Heart left ventricle (tissue), 16 donors: ENCODE measurements at regions of chr14 and their contacts with region 1.

Region 1: DNA sequence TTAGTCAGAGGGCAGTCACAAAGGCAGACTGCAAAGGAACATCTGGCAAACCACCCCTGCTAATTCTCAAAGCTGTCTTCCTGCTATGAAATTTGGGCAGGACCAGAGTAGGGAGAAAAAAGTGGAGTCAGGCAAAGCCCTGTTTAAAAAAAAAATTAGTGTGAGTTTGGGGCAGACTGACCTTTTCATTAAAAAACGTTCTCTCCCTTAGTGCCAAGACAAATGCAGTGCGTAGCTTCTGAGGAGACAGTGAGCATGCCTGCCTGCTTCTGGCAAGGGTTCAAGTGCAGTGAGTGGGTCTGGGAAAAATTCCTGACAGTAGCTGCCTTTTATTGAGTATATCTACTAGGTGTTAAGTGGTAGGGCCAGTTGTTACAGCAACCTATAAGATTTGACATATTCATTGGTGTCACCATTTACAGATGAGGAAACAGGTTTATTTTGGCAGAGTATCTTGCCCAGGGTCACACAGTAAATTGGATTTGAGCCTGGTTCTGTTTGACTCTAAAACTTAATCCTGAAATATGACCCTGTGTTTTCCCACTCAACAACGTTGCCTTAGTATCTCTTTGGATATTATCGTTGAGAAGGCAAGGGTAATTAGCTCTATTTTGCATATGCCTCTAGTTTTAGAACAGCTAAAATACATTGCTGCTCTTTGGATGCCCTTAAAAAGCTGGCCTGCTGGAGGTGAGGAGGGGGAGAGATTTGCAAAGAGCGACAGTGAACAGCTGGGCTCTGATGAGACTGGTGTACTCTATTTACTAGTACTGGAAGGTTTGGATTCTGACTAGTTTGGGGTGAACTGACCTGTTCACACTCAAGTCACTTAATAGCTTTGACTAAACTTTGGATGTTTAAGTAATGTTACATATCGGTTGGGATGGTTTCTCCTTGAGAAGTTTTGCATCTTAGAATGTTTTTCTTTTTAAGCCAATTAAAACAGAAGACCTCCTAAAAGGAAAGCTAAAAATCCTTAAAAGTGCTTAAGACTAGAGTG is 72.8 kb downstream of the PAPOLA start:
- DNase-seq: no peak
- ATAC-seq: peak in 3 of 4 donors; percentile 35 to 43 (median 41)
- H3K4me3 ChIP-seq: no peak overlapping the region
- H3K27ac ChIP-seq: no peak overlapping the region
- H3K4me1 ChIP-seq: peaks cover 0 to 23% (median 12%) of the 10 kb centered on the region in 12 donors
- H3K27me3 ChIP-seq: no peaks in the 10 kb centered on the region
- CTCF ChIP-seq: no peak
- POLR2A ChIP-seq: no peak

Region 2: DNA sequence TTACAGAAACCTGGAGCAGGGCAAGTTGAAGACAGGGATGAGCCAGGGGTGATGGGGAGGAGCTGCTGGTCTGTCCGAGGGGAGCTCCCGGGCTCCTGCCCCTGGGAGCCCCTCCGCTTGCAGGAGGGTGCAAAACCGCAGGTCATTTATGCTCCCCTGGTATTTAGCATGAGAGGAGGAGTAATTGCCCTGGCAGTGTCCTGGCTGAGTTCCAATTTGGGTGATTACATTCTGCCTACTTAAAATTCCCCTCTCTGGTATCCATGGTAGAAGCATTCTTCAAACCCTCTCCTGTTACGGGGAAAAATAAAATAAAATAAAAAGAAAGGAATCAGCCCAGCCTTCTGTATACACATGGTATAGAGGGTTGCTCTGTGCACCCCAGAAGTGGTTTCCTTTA is 160.6 kb after region 1 on chr14:
- intact Hi-C with region 1: loop called in 3 of 10 experiments (anchors 5 kb)
- DNase-seq: no peak
- ATAC-seq: no peak
- H3K4me3 ChIP-seq: no peak overlapping the region
- H3K27ac ChIP-seq: no peak overlapping the region
- H3K4me1 ChIP-seq: no peaks in the 10 kb centered on the region
- H3K27me3 ChIP-seq: peaks cover 0 to 69% (median 16%) of the 10 kb centered on the region in 9 donors
- CTCF ChIP-seq: no peak
- POLR2A ChIP-seq: no peak

Region 3: DNA sequence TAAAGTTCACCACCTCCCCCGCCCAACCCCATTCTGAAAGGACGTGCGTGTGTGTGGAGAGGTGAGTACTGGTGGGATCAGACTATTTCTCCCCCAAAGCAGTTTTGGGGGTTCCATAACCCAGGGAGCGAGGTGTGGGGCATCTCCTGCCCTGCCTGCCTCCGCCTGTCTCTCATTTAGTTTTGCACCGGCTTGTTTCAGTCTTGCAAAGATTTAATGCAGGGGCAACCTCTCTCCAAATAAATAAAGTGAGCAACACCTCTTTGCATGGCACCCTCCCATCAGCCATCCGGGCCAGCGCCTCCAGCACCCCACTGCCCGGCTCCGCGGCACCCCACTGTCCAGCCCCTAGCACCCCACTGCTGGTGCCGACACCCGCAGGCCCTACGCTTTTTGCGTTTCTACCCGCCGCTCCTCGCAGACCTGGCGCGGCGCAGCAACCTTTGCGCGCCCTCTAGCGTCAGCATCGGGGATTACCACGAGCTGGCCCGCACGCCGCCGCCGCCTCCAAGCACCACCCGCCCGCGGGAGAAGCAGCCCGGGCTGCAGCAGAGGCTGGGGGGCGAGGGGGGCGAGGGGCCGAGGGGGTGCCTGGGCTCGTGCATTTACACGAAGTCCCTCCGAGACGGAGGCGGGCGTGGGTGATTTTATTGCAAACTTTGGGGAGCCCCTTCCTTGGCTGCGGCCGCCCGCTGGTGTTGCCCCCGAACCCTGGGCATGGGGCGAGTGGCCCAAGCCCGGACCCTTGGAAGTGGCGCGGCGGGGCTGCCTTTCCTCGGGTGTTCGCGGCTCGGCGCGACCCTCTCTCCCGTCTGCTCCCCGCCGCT is 166.4 kb after region 1 on chr14:
- intact Hi-C with region 1: loop called in 4 of 10 experiments (anchors 5 kb)
- DNase-seq: peak; percentile 37 to 84 (median 54)
- ATAC-seq: peak in 3 of 4 donors; percentile 62 to 85 (median 77)
- H3K4me3 ChIP-seq: peak overlapping the region in 10 of 12 donors; percentile 19 to 53 (median 42)
- H3K27ac ChIP-seq: no peak overlapping the region
- H3K4me1 ChIP-seq: peaks cover 0 to 10% (median 6%) of the 10 kb centered on the region in 12 donors
- H3K27me3 ChIP-seq: peaks cover 0 to 90% (median 30%) of the 10 kb centered on the region in 9 donors
- CTCF ChIP-seq: peak; percentile 72 to 95 (median 88)
- POLR2A ChIP-seq: no peak

Region 4: GRCh38 chr14:96748362-96748761 is 173.4 kb after region 1 on chr14:
- intact Hi-C with region 1: loop called in 3 of 10 experiments (anchors 5 kb)
- DNase-seq: peak in 1 of 5 donors; percentile 4
- ATAC-seq: no peak
- H3K4me3 ChIP-seq: no peak overlapping the region
- H3K27ac ChIP-seq: no peak overlapping the region
- H3K4me1 ChIP-seq: no peaks in the 10 kb centered on the region
- H3K27me3 ChIP-seq: peaks cover 0 to 56% (median 14%) of the 10 kb centered on the region in 9 donors
- CTCF ChIP-seq: no peak
- POLR2A ChIP-seq: no peak

Region 5: DNA sequence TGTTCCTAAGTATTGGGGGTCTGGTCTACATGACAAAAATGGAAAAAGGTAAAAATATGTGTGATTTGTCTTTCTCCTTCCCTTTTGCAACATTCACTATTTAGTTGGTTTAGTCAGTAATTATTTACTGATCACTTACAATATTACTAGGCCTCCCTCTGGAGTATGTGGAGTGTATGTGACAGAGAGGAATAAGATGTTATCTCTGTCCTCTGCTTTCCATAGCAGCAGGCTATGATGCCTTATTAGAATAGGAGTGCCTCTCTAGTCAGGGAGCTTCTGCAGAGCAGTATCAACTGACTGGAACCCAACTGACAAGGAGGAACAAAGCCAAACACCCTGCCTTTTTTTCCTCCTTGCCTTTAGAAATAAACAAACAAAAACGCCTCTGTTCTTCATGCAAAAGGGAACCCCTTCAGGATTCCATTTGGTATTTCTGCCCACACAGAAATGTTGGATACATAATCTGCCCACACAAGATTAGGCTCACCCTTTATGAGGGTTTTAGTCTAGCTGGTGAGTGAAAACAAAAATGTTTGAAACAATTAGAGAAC is 272.4 kb after region 1 on chr14:
- intact Hi-C with region 1: loop called in 1 of 10 experiments (anchors 5 kb)
- DNase-seq: no peak
- ATAC-seq: no peak
- H3K4me3 ChIP-seq: no peak overlapping the region
- H3K27ac ChIP-seq: no peak overlapping the region
- H3K4me1 ChIP-seq: no peaks in the 10 kb centered on the region
- H3K27me3 ChIP-seq: no peaks in the 10 kb centered on the region
- CTCF ChIP-seq: no peak
- POLR2A ChIP-seq: no peak

Region 6: GRCh38 chr14:97959251-97959650 is 1384.3 kb after region 1 on chr14:
- intact Hi-C with region 1: no loop called
- DNase-seq: no peak
- ATAC-seq: no peak
- H3K4me3 ChIP-seq: no peak overlapping the region
- H3K27ac ChIP-seq: no peak overlapping the region
- H3K4me1 ChIP-seq: no peaks in the 10 kb centered on the region
- H3K27me3 ChIP-seq: no peaks in the 10 kb centered on the region
- CTCF ChIP-seq: no peak
- POLR2A ChIP-seq: no peak